ENCODE measurements at regions of chr2 and their contacts with region 1.

Region 1: GRCh38 chr2:47323009-47323821 is 79.7 kb upstream of the MSH2 start:
- DNase-seq: peak; percentile 70 to 81 (median 71)
- ATAC-seq: peak; percentile 90 to 95 (median 94)
- H3K4me3 ChIP-seq: no peak overlapping the region
- H3K27ac ChIP-seq: no peak overlapping the region
- H3K4me1 ChIP-seq: peaks cover 0 to 8% (median 2%) of the 10 kb centered on the region in 12 donors
- H3K27me3 ChIP-seq: no peaks in the 10 kb centered on the region
- CTCF ChIP-seq: peak; percentile 91 to 98 (median 96)
- POLR2A ChIP-seq: no peak

Region 2: GRCh38 chr2:46666044-46666679 is 657.1 kb before region 1 on chr2:
- intact Hi-C with region 1: loop called in 1 of 10 experiments (anchors 10 kb)
- DNase-seq: peak; percentile 68 to 87 (median 80)
- ATAC-seq: peak; percentile 45 to 73 (median 66)
- H3K4me3 ChIP-seq: no peak overlapping the region
- H3K27ac ChIP-seq: peak overlapping the region in 5 of 12 donors; percentile 4 to 65 (median 7)
- H3K4me1 ChIP-seq: peaks cover 0 to 56% (median 17%) of the 10 kb centered on the region in 12 donors
- H3K27me3 ChIP-seq: no peaks in the 10 kb centered on the region
- CTCF ChIP-seq: no peak
- POLR2A ChIP-seq: no peak

Region 3: DNA sequence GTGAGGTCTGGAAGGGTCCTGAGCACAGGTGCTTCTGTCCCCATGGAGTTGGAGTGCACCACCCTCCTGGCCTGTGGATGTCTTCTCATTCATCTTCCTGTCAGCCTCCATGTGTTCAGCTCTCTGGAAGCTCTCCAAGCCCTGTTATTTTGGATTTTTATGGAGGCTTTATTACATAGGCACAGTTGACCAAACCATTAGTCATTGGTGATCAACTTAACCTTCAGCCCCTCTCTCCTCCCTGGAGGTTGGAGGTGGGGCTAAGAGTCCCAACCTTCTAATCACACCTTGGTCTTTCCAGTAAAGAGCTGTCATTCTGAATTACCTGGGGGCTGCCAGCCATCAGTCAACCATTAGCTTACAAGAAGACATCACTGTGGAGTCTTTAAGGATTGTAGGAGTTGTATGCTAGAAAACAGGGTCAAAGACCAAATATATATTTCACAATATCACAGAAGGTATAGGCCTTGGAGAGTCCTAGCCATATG is 400.1 kb before region 1 on chr2:
- intact Hi-C with region 1: loop called in 8 of 10 experiments (anchors 2 to 10 kb)
- DNase-seq: no peak
- ATAC-seq: no peak
- H3K4me3 ChIP-seq: no peak overlapping the region
- H3K27ac ChIP-seq: no peak overlapping the region
- H3K4me1 ChIP-seq: peaks cover 0 to 4% (median 0%) of the 10 kb centered on the region in 12 donors
- H3K27me3 ChIP-seq: no peaks in the 10 kb centered on the region
- CTCF ChIP-seq: no peak
- POLR2A ChIP-seq: no peak

Region 4: DNA sequence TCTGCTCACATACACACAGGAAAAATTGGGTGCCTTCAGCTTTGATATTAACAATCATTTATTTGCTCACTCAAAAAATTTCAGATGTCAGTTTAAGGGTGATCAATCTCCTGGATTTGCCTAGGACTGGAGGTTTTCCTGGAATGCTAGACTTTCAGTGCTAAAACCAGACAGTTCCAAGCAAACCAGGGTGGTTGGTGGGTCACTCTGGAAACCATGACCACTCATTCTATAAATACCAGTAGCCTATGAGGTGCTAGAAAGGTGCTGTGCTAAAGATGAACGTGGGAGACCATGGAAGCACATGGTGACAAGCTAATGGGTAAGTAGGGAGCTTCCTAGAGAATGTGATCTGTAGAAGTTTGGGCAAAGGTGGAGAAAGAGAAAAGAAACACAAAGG is 142.7 kb before region 1 on chr2:
- intact Hi-C with region 1: loop called in 1 of 10 experiments (anchors 5 kb)
- DNase-seq: no peak
- ATAC-seq: no peak
- H3K4me3 ChIP-seq: no peak overlapping the region
- H3K27ac ChIP-seq: no peak overlapping the region
- H3K4me1 ChIP-seq: peaks cover 0 to 8% (median 2%) of the 10 kb centered on the region in 12 donors
- H3K27me3 ChIP-seq: no peaks in the 10 kb centered on the region
- CTCF ChIP-seq: no peak
- POLR2A ChIP-seq: no peak